Posterior vena cava (tissue), 2 donors: ENCODE measurements at regions of chr15 and their contacts with region 1.

Region 1: GRCh38 chr15:55357774-55358173 is 38.8 kb downstream of the PIGB start:
- DNase-seq: no peak

Region 2: GRCh38 chr15:55196458-55197361 is 161.1 kb before region 1 on chr15 and contains the start of gene RSL24D1:
- intact Hi-C with region 1: no loop called
- DNase-seq: peak; percentile 99
- total RNA-seq, gene RSL24D1: 68.9 to 69.9 TPM

Region 3: DNA sequence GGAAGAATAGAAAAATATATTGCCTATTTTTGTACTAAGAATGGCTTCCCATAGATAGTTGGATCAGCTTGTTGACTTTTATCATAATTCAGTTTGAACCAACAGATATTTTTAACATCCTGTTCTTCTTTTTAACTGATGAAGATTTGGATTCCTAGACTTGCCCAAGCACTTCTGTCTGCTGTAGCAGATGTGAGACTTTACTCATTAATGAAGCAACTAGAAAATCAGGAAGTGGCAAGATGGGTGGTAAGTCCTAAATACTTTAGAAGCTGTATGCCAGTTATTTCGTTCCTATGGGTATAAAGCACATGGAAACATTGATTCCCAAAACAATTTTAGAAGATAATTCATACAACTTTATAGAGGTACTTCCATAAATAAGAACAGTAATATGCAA is 30.4 kb before region 1 on chr15:
- intact Hi-C with region 1: loop called in 1 of 2 experiments (anchors 1 kb)
- DNase-seq: no peak

Region 4: DNA sequence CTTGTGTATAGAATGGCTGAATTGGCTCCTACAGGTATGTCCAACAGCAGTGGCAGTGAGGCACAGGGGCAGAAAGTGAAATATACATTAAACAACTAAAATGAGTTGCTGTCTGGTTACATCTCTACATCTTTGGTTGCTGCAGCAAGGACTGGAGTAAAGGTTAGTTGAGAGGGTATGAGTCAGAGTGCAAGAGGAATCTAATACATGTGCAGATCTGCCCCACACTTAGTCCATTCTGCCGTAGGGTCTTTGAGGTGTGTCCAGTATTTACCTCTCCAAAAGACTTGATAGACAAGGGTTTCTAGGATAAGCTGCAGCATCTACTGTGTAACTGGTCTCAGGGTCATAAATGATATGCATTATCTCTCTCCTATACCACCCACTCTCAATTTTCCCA is 641.9 kb after region 1 on chr15:
- intact Hi-C with region 1: no loop called
- DNase-seq: no peak